Transverse colon (tissue), 4 donors: ENCODE measurements at regions of chr10 and their contacts with region 1.

Region 1: DNA sequence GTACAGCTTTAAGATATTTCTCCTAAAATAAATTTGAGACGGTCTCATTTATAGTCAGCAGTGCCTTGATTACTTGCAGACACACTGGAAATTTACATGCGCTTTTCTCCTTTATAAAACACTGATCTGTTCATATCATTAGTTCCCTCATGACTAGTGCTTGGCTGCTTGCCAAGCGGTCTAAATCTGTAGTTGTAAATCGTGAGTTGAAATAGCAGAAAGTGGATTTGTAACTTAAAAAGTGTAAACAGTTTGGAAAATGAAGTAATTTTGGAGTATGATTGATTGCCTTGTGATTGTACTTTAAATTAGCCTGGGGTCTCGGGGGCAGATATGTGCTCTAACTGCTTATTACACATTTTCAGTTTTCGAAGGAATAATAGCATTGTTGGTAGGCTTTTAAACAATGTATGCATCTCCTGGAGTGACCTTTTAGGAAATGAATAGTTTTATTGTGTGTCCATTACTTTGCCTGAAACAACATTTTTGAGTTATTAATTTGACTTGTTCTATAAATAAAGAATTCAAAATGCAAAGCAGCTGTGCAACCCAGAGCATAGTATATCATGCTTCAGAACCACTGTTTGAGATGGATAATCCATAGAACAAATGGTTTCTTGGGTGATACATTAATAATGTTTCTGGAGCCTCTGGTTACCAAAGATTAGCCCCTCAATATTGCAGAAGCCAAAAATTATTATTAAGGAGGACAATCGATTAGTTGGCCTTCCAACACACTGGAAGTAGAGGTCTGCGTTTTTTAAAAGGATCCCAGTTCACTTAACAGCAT is 73.3 kb downstream of the ARID5B start:
- DNase-seq: peak; percentile 51
- H3K4me3 ChIP-seq: no peak overlapping the region
- H3K27ac ChIP-seq: peak overlapping the region; percentile 53 to 68 (median 58)
- H3K4me1 ChIP-seq: peaks cover 4 to 57% (median 36%) of the 10 kb centered on the region in 4 donors
- H3K27me3 ChIP-seq: no peaks in the 10 kb centered on the region
- CTCF ChIP-seq: no peak
- EP300 ChIP-seq: no peak
- POLR2A ChIP-seq: no peak

Region 2: GRCh38 chr10:61835069-61835945 is 139.5 kb before region 1 on chr10:
- in situ Hi-C with region 1: no loop called
- intact Hi-C with region 1: no loop called
- DNase-seq: peak; percentile 16
- H3K4me3 ChIP-seq: no peak overlapping the region
- H3K27ac ChIP-seq: peak overlapping the region; percentile 60 to 76 (median 73)
- H3K4me1 ChIP-seq: peaks cover 14 to 45% (median 36%) of the 10 kb centered on the region in 4 donors
- H3K27me3 ChIP-seq: no peaks in the 10 kb centered on the region
- CTCF ChIP-seq: peak; percentile 27 to 67 (median 42)
- EP300 ChIP-seq: no peak
- POLR2A ChIP-seq: no peak

Region 3: GRCh38 chr10:61941202-61941681 is 33.6 kb before region 1 on chr10:
- in situ Hi-C with region 1: no loop called
- intact Hi-C with region 1: loop called (anchors 1 kb)
- DNase-seq: no peak
- H3K4me3 ChIP-seq: no peak overlapping the region
- H3K27ac ChIP-seq: peak overlapping the region; percentile 71 to 85 (median 82)
- H3K4me1 ChIP-seq: peaks cover 17 to 83% (median 61%) of the 10 kb centered on the region in 4 donors
- H3K27me3 ChIP-seq: no peaks in the 10 kb centered on the region
- CTCF ChIP-seq: no peak
- EP300 ChIP-seq: no peak
- POLR2A ChIP-seq: no peak

Region 4: GRCh38 chr10:62005687-62006086 is 30.9 kb after region 1 on chr10:
- in situ Hi-C with region 1: no loop called
- intact Hi-C with region 1: loop called (anchors 1 kb)
- DNase-seq: no peak
- H3K4me3 ChIP-seq: no peak overlapping the region
- H3K27ac ChIP-seq: no peak overlapping the region
- H3K4me1 ChIP-seq: peaks cover 6 to 44% (median 20%) of the 10 kb centered on the region in 4 donors
- H3K27me3 ChIP-seq: no peaks in the 10 kb centered on the region
- CTCF ChIP-seq: no peak
- EP300 ChIP-seq: no peak
- POLR2A ChIP-seq: no peak